WTC11 (cell line): ENCODE measurements at regions of chr12 and their contacts with region 1.

Region 1: GRCh38 chr12:16949871-16950667 is 344.1 kb upstream of the LMO3 start:
- DNase-seq: peak; percentile 21
- ATAC-seq: peak; percentile 96
- H3K4me3 Mint-ChIP-seq: no peak overlapping the region
- H3K27ac Mint-ChIP-seq: no peak overlapping the region
- H3K4me1 Mint-ChIP-seq: peaks cover 17% of the 10 kb centered on the region
- H3K27me3 Mint-ChIP-seq: no peaks in the 10 kb centered on the region
- CTCF ChIP-seq: no peak

Region 2: GRCh38 chr12:16939871-16940306 is 10.2 kb before region 1 on chr12:
- CTCF ChIA-PET with region 1: interaction called, 26 read pairs
- POLR2A ChIA-PET with region 1: no interaction called
- DNase-seq: peak; percentile 74
- ATAC-seq: peak; percentile 99
- H3K4me3 Mint-ChIP-seq: no peak overlapping the region
- H3K27ac Mint-ChIP-seq: no peak overlapping the region
- H3K4me1 Mint-ChIP-seq: no peaks in the 10 kb centered on the region
- H3K27me3 Mint-ChIP-seq: no peaks in the 10 kb centered on the region
- CTCF ChIP-seq: peak; percentile 90